ENCODE measurements at regions of chr2 and their contacts with region 1.

Region 1: GRCh38 chr2:17672583-17673317 is 80.9 kb downstream of the SMC6 start:
- DNase-seq: no peak
- H3K4me3 ChIP-seq: no peak overlapping the region
- H3K27ac ChIP-seq: no peak overlapping the region
- H3K4me1 ChIP-seq: no peaks in the 10 kb centered on the region
- H3K27me3 ChIP-seq: no peaks in the 10 kb centered on the region
- CTCF ChIP-seq: no peak
- EP300 ChIP-seq: no peak
- POLR2A ChIP-seq: no peak

Region 2: GRCh38 chr2:17470855-17471641 is 201.7 kb before region 1 on chr2:
- intact Hi-C with region 1: loop called (anchors 10 kb)
- DNase-seq: no peak
- H3K4me3 ChIP-seq: no peak overlapping the region
- H3K27ac ChIP-seq: no peak overlapping the region
- H3K4me1 ChIP-seq: no peaks in the 10 kb centered on the region
- H3K27me3 ChIP-seq: no peaks in the 10 kb centered on the region
- CTCF ChIP-seq: peak in 2 of 3 experiments; percentile 1 to 22
- EP300 ChIP-seq: no peak
- POLR2A ChIP-seq: no peak

Region 3: GRCh38 chr2:17646081-17646554 is 26.6 kb before region 1 on chr2:
- intact Hi-C with region 1: loop called (anchors 1 kb)
- DNase-seq: peak; percentile 91
- H3K4me3 ChIP-seq: no peak overlapping the region
- H3K27ac ChIP-seq: peak overlapping the region in 1 of 4 donors; percentile 19
- H3K4me1 ChIP-seq: peaks cover 19 to 42% (median 36%) of the 10 kb centered on the region in 4 donors
- H3K27me3 ChIP-seq: no peaks in the 10 kb centered on the region
- CTCF ChIP-seq: peak; percentile 82 to 90 (median 89)
- EP300 ChIP-seq: no peak
- POLR2A ChIP-seq: no peak

Region 4: DNA sequence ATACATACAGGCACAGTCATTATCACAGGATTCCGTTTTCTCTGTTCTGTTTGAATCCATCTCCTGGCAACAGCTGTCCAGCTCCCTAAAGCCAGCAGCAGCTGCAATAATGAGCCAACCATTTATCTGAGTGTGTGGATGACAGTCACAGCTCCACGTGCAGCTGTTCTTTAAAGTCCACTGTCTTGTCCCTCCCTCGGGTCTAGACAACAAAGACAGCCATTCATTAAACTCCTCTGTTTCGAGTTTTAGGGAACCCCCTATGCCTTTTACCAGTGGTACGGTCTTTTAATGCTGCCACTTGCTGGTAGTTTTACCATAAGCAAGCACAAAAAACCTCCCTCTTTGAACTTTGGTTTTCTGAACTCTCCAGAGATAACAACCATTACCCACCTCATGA is 127.5 kb after region 1 on chr2:
- intact Hi-C with region 1: no loop called
- DNase-seq: peak; percentile 39
- H3K4me3 ChIP-seq: no peak overlapping the region
- H3K27ac ChIP-seq: no peak overlapping the region
- H3K4me1 ChIP-seq: peaks cover 0 to 10% (median 7%) of the 10 kb centered on the region in 4 donors
- H3K27me3 ChIP-seq: no peaks in the 10 kb centered on the region
- CTCF ChIP-seq: no peak
- EP300 ChIP-seq: no peak
- POLR2A ChIP-seq: no peak

Region 5: GRCh38 chr2:17813742-17814473 is 141.2 kb after region 1 on chr2:
- intact Hi-C with region 1: no loop called
- DNase-seq: no peak
- H3K4me3 ChIP-seq: no peak overlapping the region
- H3K27ac ChIP-seq: peak overlapping the region in 1 of 4 donors; percentile 17
- H3K4me1 ChIP-seq: no peaks in the 10 kb centered on the region
- H3K27me3 ChIP-seq: no peaks in the 10 kb centered on the region
- CTCF ChIP-seq: no peak
- EP300 ChIP-seq: no peak
- POLR2A ChIP-seq: no peak

Measured in esophagus muscularis mucosa (tissue), 4 donors.